ENCODE measurements at regions of chr1 and their contacts with region 1.

Region 1: GRCh38 chr1:148334339-148335130 is 148.6 kb downstream of the PPIAL4G start:
- DNase-seq: peak; percentile 71 to 94 (median 74)
- ATAC-seq: peak; percentile 95
- H3K4me3 ChIP-seq: peak overlapping the region; percentile 55
- H3K27ac ChIP-seq: peak overlapping the region; percentile 100
- H3K4me1 ChIP-seq: peaks cover 4 to 18% of the 10 kb centered on the region in 2 experiments; a peak in 4 of 5 replicates
- H3K27me3 ChIP-seq: no peaks in the 10 kb centered on the region
- CTCF ChIP-seq: no peak; a peak in 1 of 6 replicates
- EP300 ChIP-seq: peak; percentile 70
- POLR2A ChIP-seq: peak; percentile 100
- RAD21 ChIP-seq: peak; percentile 41 to 43; a peak in 3 of 4 replicates

Region 2: GRCh38 chr1:147890177-147890790 is 444.3 kb before region 1 on chr1:
- CTCF ChIA-PET with region 1: no interaction called
- POLR2A ChIA-PET with region 1: no interaction called
- in situ Hi-C with region 1: no loop called
- intact Hi-C with region 1: no loop called
- DNase-seq: peak; percentile 64 to 83 (median 70)
- ATAC-seq: peak; percentile 100
- H3K4me3 ChIP-seq: no peak overlapping the region
- H3K27ac ChIP-seq: no peak overlapping the region
- H3K4me1 ChIP-seq: no peaks in the 10 kb centered on the region
- H3K27me3 ChIP-seq: peaks cover 2 to 6% of the 10 kb centered on the region in 2 experiments; a peak in 4 of 5 replicates
- CTCF ChIP-seq: peak; percentile 89 to 94 (median 89)
- EP300 ChIP-seq: no peak
- POLR2A ChIP-seq: no peak
- RAD21 ChIP-seq: peak; percentile 81 to 98

Region 3: GRCh38 chr1:148263128-148263905 is 71.2 kb before region 1 on chr1:
- CTCF ChIA-PET with region 1: no interaction called
- POLR2A ChIA-PET with region 1: interaction called, 15 read pairs
- in situ Hi-C with region 1: no loop called
- intact Hi-C with region 1: loop called (anchors 2 kb)
- DNase-seq: peak; percentile 34 to 85 (median 47)
- ATAC-seq: peak; percentile 84
- H3K4me3 ChIP-seq: peak overlapping the region; percentile 30
- H3K27ac ChIP-seq: peak overlapping the region; percentile 95
- H3K4me1 ChIP-seq: peaks cover 0 to 7% of the 10 kb centered on the region in 2 experiments; a peak in 3 of 5 replicates
- H3K27me3 ChIP-seq: no peaks in the 10 kb centered on the region
- CTCF ChIP-seq: no peak
- EP300 ChIP-seq: peak; percentile 22; the same call in 1 of the 2 replicates
- POLR2A ChIP-seq: peak; percentile 100
- RAD21 ChIP-seq: peak in 1 of 2 experiments; percentile 34; a peak in 2 of 4 replicates

Region 4: DNA sequence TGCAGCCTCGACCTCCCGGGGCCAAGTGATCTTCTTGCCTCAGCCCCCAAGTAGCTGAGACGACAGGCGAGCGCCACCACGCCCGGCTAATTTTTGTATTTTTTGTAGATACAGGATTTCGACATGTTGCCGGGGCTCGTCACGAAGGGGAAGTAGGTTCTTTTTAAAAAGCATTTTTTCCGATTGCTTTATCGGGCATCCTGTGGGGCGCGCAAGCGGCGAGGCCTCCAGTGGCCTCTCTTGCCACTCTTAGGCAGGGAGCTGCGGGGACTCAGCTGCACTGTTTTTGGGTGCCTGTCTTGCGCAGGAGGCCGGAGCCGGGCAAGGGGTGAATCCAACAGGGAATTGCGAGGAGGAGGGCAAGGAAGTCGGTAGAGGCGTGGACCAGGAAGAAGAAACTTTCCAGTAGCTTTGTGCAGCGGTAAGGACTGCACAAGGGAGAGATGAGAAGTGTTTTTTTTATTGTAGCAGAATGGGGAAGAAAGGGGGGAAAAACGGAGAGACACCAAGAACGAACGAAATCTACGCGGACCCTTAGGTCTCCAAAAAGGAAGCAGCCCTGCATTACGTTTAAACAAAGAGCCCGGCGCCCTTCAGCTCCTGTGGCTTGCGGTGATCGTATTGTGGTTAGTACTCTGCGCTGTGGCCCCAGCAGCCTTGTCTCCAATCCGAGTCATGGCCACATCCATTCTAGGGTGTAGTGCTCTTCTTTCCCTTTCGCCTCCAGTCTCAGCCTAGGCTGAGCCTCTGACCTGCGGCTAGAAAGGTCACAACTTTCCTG is 16.2 kb before region 1 on chr1:
- CTCF ChIA-PET with region 1: no interaction called
- POLR2A ChIA-PET with region 1: interaction called, 20 read pairs
- in situ Hi-C with region 1: no loop called
- intact Hi-C with region 1: no loop called
- DNase-seq: no peak
- ATAC-seq: no peak
- H3K4me3 ChIP-seq: no peak overlapping the region
- H3K27ac ChIP-seq: no peak overlapping the region
- H3K4me1 ChIP-seq: peaks cover 0 to 12% of the 10 kb centered on the region in 2 experiments; a peak in 2 of 5 replicates
- H3K27me3 ChIP-seq: peaks cover 2 to 15% of the 10 kb centered on the region in 2 experiments; a peak in 1 of 5 replicates
- CTCF ChIP-seq: no peak
- EP300 ChIP-seq: no peak
- POLR2A ChIP-seq: no peak
- RAD21 ChIP-seq: no peak

Region 5: DNA sequence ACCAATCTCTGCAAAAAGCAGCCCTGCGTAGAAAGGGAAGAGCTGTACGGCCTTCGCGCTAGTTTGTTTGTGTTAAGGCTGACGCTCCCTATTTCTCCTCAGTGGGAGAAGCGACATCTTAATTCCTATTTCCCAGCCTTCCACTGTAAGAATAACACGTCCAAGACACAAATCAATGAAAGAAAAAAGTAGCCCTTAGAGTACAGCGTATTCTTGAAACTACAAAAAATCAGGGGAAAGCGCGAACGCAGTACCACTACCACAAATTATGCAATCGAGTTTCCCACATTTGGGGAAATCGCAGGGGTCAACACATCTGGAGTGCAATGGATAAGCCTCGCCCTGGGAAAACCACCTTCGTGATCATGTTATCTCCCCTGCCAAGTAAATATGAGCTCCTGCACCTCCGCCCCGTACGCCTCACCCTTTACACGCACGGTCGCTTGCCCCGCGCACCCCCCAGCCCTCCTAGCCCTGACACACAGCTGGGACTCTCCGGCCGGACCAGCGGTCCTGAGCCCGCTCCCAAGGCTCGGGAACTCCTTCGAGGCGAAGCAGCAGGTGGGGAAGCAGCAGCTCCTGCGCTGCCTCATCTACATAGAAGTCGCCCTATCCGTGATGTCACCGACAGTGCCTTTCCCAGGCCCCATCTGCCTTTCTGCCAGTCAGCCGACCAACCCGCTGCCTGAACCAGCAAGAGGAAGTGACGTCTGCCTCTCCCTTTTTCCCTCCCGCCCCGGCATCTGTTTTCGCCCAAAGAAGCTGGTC is 53.9 kb after region 1 on chr1:
- CTCF ChIA-PET with region 1: no interaction called
- POLR2A ChIA-PET with region 1: interaction called, 12 read pairs
- in situ Hi-C with region 1: no loop called
- intact Hi-C with region 1: loop called (anchors 2 kb)
- DNase-seq: peak; percentile 88 to 95 (median 90)
- ATAC-seq: peak; percentile 90
- H3K4me3 ChIP-seq: peak overlapping the region; percentile 42
- H3K27ac ChIP-seq: peak overlapping the region; percentile 97
- H3K4me1 ChIP-seq: peaks cover 14 to 19% of the 10 kb centered on the region in 2 experiments; a peak in 4 of 5 replicates
- H3K27me3 ChIP-seq: no peaks in the 10 kb centered on the region
- CTCF ChIP-seq: no peak
- EP300 ChIP-seq: 0 out of 2 replicates have a peak, but pooled peaks have one; percentile 29
- POLR2A ChIP-seq: peak; percentile 100
- RAD21 ChIP-seq: no peak

Measured in K562 (cell line).